Activated CD4-positive, alpha-beta T cell treated with anti-CD3 and anti-CD28 coated beads, Interleukin-2, amount 10 ng/mL, durations not matched to agents 24 days and 14 days (primary cell): ENCODE measurements at regions of chr17 and their contacts with region 1.

Region 1: GRCh38 chr17:18038861-18039534 is at the starts of genes ATPAF2 and GID4:
- DNase-seq: peak; percentile 100
- H3K4me3 Mint-ChIP-seq: peak within 1 kb of the TSS; percentile 93
- H3K27ac Mint-ChIP-seq: peak within 1 kb of the TSS; percentile 92
- H3K4me1 Mint-ChIP-seq: peaks cover 39% of the 10 kb centered on the region
- H3K27me3 Mint-ChIP-seq: no peaks in the 10 kb centered on the region
- total RNA-seq, gene ATPAF2: 31.9 and 33.1 TPM in 2 replicates
- total RNA-seq, gene GID4: 9.6 and 11.3 TPM in 2 replicates

Region 2: DNA sequence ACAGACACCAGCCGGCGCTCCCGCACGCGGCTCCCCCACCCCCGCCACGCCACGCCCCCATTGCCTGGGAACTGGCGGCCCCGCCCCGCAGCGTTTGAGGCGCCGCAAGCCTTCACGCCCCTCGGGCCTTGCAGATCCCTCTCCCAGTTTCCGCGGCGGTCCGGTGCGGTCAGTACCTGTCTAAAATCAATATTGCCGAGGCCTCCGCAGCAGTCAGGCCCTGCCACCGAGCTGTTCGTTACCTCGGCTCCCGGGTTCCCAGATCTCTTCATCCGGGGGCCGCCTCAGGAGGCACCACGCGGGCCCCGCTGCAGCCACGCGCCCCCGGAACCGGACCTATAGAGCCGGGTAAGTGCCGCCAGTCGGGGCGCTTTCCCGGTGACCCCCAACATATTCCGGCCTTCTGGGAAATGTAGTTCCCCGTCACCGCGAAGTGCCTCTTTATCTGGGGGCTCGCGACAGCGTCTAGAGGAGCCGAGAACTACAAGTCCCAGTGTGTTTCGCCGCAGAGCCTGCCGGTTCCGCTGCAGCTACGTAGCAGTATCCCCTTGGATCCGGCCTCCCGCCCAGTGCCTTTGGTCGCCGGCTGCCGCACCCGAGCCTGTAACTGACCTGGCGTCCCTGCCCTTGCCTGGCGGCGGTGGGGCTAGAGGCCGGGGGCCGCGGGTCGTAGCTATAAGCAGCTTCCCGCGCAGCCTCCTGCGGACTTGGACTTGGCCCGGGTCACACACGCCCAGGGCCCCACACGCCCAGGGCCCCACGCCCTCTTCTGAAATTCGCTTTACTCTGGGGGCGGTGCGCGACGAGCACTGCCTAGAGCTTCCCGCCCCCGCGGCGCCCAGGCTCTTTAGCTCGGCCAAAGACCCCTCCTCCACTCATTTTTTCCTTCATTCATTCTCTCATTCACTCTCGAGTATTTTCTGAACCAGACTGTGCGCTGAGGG is 447.4 kb before region 1 on chr17 and contains the start of gene PEMT:
- intact Hi-C with region 1: loop called (anchors 1 kb)
- DNase-seq: peak; percentile 98
- H3K4me3 Mint-ChIP-seq: peak within 1 kb of the TSS; percentile 92
- H3K27ac Mint-ChIP-seq: peak within 1 kb of the TSS; percentile 96
- H3K4me1 Mint-ChIP-seq: peaks cover 18% of the 10 kb centered on the region
- H3K27me3 Mint-ChIP-seq: no peaks in the 10 kb centered on the region
- total RNA-seq, gene PEMT: 43.6 and 45.5 TPM in 2 replicates

Region 3: DNA sequence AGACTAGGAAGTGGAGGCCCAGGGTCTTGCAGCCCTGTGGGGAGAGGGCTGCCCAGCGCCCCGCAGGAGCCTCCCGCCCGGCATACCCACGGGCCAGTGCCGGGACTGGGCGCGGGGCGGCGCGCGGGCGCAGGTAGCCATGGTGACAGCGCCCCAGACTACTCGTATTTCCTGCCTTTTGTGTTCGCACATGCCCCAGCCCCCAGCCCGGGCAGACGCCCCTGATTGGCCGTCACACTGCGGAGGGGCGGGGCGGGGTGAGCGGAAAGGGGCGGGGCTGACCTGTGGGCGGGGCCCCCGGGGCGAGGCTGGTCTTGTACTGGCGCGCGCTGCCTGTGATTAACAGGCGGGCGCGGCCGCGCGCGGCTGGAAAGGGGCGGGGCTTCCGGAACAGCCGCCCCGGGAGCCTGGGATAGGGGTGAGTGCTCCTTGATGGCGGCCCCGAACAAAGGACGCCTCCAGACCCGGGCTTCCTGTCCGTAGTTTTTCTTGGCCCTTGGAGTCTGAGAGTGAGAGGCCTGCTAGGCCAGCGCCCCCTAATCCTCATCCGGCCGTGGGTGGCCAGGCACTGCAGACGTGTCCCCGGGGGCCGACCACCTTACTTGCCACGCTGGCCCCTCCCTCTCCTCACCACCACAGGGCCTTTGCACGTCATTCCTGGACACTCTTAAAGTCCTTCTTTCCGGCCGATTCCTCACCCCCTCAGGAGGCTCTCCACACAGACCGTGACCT is 286.7 kb before region 1 on chr17:
- intact Hi-C with region 1: loop called (anchors 1 kb)
- DNase-seq: peak; percentile 99
- H3K4me3 Mint-ChIP-seq: peak overlapping the region; percentile 93
- H3K27ac Mint-ChIP-seq: peak overlapping the region; percentile 95
- H3K4me1 Mint-ChIP-seq: peaks cover 44% of the 10 kb centered on the region
- H3K27me3 Mint-ChIP-seq: no peaks in the 10 kb centered on the region

Region 4: DNA sequence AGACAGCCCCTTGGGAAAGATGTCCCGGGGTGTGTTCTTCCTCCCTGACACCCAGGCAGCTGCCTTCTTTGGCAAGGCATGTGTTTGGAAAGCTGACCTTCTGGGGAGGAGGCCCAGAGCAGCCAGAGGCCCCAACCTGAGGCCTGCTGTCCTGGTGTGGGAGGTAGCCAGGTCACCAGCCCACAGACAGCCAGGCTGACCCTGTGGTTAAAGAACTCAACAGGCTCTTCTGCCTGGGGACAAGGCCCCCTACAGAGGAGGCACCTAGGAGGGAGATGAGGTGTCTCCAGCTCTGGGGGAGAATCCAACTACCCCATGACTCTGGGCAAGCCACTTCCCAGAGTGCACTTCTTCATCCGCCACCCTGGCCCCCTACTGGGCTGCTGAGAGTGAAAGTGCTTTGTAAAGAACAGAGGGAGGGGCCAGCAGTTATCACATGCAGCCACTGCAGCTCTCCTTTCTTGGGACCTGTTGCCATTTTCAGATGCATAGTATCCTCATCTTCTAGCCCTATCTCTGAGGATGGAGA is 189.1 kb before region 1 on chr17:
- intact Hi-C with region 1: loop called (anchors 5 kb)
- DNase-seq: peak; percentile 93
- H3K4me3 Mint-ChIP-seq: peak overlapping the region; percentile 64
- H3K27ac Mint-ChIP-seq: peak overlapping the region; percentile 97
- H3K4me1 Mint-ChIP-seq: peaks cover 66% of the 10 kb centered on the region
- H3K27me3 Mint-ChIP-seq: no peaks in the 10 kb centered on the region

Region 5: DNA sequence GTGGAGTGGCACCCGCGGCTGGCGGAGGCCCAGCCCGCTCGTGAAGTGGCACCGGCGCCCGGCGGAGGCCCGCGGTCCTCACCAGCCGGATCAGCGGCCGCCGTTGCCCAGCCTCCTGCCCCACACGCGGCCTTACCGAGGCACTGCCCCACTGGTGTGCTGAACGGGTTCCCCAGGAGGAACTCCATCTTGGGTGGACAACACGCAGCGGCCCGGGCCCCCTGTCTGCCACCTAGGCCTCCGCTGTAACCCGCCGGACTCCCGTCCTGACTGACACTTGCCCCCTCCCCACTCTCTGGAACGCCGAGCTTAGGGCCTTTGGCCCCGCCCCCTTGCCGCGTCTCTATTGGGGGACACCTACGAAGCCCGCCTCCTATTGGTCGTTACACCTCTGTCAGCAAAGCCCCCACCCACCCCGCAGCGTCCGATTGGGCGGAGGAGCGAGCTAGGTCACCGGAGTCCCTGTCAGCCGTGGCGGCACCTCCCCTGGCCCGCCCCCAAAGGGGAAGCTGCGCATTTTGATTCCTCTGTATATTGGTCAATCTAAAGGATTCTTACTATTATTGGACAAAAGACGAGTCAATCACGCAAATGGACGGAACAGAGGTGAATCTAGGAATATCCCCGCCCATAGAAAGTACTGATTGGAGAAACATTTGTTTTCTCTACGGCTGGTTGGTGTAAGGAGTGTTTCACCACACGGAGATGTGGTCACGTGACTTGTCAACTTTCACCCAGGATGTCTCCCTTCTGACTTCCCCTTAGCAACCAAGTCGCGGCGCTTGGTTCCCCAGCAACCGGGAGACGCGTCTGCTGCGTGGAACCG is 66.7 kb before region 1 on chr17 and contains the starts of genes DRC3 and TOM1L2:
- intact Hi-C with region 1: loop called (anchors 1 kb)
- DNase-seq: peak; percentile 100
- H3K4me3 Mint-ChIP-seq: peak within 1 kb of the TSS; percentile 94
- H3K27ac Mint-ChIP-seq: peak within 1 kb of the TSS; percentile 92
- H3K4me1 Mint-ChIP-seq: peaks cover 22% of the 10 kb centered on the region
- H3K27me3 Mint-ChIP-seq: no peaks in the 10 kb centered on the region
- total RNA-seq, gene DRC3: 0.42 TPM in 1 of 2 replicates, not detected in the other
- total RNA-seq, gene TOM1L2: 8.8 and 10.0 TPM in 2 replicates

Region 6: DNA sequence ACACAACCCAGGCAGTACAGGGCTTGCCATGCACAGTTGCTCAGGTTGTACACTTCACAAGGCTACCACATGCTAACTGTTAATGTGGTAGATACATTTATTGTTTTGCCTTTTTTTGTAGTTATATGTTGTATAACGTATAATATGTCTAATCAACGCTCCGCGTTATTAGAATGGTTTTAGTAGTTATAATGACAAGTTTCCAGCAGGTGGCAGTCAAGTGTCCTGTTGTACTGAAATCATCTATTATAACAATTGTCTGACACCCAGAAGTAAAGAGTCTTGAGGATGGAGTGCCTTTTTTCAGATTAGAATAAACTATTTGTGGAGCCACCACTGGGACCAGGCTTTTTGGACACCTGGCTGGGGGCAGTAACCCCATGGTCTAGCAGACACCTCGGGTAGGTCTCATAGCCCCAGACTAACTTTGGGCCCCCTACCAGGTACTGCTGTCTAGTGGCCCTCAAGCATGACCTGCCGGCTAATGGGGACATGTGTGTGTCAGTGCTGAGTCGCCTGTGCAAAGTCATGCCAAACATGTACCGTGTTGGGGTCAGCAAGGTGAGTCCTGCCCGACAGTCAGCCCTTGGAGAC is 102.3 kb after region 1 on chr17:
- intact Hi-C with region 1: no loop called
- DNase-seq: peak; percentile 84
- H3K4me3 Mint-ChIP-seq: no peak overlapping the region
- H3K27ac Mint-ChIP-seq: no peak overlapping the region
- H3K4me1 Mint-ChIP-seq: no peaks in the 10 kb centered on the region
- H3K27me3 Mint-ChIP-seq: no peaks in the 10 kb centered on the region